ENCODE measurements at regions of chr20 and their contacts with region 1.

Region 1: DNA sequence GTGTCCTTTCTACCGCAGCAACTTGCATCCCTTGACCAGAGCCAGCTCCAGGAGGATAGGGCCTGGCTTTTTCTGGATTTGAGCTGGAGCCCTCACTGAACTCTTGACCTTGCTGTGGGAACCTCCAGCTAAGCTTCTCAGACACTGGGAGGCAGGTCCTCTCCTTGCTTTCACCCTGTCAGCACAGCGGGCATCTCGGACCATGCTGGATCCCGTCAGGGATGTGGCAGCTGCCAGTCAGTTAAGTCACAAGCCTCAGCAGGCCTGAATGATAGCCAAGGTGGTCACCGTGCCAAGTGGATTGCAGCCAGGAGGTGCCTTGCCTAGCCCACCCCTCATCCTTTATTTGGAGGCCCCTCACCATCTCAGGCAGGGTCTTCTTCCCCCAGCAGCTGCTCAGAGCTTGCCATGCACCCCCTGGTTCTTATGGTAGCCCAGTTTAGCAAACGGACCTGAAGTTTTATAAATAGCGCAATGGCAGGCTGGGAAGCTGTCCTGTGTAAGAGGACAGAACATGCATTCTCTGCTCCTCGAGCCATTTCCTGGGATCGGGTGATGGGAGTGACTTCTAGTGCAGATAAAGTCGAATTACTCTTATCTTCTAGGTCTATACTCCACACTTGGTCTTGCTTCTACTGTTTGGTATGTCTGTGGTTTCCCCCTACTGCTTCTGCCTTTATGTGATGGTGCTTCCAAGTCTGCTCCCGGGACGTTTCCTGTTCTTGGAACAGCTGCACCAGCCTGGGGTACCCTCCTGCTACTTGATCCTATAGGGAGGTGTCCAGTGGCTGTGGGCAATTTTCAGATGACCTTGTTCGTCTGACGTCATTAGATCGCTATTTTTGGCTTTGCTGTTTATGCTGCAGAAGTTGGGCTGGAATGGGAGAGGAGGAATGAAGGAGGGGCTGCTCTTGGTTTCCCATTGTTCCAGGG is 7.1 kb upstream of the MYLK2 start:
- DNase-seq: no peak
- ATAC-seq: peak; percentile 56

Region 2: GRCh38 chr20:31661625-31662371 is 150.3 kb before region 1 on chr20:
- intact Hi-C with region 1: loop called (anchors 10 kb)
- DNase-seq: peak; percentile 91
- ATAC-seq: peak; percentile 85

Region 3: DNA sequence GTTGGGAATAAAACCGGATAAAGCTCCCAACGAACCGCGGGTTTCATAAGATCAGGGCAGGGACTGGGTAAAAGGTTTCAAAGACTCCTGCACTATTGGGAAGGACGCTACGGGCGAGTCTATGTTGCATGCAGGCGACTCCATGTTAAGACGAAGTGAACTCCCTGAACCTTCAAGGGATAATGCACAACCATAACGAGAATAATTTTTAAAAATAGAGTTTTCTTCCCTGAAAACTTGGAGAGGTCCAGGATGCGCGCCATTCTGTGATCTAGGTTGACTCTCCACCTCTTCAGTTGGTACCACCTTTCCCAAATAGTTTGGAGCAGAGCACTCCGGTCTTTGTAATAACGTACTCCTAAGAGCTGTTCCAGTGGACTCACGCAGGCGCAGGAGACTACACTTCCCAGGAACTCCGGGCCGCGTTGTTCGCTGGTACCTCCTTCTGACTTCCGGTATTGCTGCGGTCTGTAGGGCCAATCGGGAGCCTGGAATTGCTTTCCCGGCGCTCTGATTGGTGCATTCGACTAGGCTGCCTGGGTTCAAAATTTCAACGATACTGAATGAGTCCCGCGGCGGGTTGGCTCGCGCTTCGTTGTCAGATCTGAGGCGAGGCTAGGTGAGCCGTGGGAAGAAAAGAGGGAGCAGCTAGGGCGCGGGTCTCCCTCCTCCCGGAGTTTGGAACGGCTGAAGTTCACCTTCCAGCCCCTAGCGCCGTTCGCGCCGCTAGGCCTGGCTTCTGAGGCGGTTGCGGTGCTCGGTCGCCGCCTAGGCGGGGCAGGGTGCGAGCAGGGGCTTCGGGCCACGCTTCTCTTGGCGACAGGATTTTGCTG is 73.1 kb before region 1 on chr20 and contains the start of gene TPX2:
- intact Hi-C with region 1: loop called (anchors 5 kb)
- DNase-seq: peak; percentile 96
- ATAC-seq: peak; percentile 100
- total RNA-seq, gene TPX2: 1.2 TPM